ENCODE measurements at regions of chr22 and their contacts with region 1.

Region 1: GRCh38 chr22:17742527-17742902 is 31.8 kb downstream of the BID start:
- DNase-seq: peak; percentile 95
- ATAC-seq: peak; percentile 91
- H3K4me3 Mint-ChIP-seq: no peak overlapping the region
- H3K27ac Mint-ChIP-seq: no peak overlapping the region; the same call in 1 of the 2 replicates
- H3K4me1 Mint-ChIP-seq: peaks cover 19% of the 10 kb centered on the region
- H3K27me3 Mint-ChIP-seq: no peaks in the 10 kb centered on the region
- CTCF ChIP-seq: peak; percentile 74

Region 2: DNA sequence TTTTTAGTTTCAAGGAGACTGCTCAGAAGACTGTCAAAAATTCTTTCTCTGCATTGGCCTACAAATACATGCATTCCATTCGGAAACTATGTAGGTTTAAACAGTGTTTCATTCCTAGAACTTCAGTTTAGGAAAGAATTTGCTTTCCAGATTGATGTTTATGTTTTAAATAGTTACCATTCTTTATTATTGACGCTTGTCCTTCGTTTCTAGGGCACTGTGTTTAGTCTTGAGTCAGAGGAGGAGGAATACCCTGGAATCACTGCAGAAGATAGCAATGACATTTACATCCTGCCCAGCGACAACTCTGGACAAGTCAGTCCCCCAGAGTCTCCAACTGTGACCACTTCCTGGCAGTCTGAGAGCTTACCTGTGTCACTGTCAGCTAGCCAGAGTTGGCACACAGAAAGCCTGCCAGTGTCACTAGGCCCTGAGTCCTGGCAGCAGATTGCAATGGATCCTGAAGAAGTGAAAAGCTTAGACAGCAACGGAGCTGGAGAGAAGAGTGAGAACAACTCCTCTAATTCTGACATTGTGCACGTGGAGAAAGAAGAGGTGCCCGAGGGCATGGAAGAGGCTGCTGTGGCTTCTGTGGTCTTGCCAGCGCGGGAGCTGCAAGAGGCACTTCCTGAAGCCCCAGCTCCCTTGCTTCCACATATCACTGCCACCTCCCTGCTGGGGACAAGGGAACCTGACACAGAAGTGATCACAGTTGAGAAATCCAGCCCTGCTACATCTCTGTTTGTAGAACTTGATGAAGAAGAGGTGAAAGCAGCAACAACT is 15.9 kb before region 1 on chr22:
- CTCF ChIA-PET with region 1: interaction called, 12 read pairs
- POLR2A ChIA-PET with region 1: no interaction called
- DNase-seq: no peak
- ATAC-seq: no peak
- H3K4me3 Mint-ChIP-seq: no peak overlapping the region
- H3K27ac Mint-ChIP-seq: peak overlapping the region; percentile 46; the same call in 1 of the 2 replicates
- H3K4me1 Mint-ChIP-seq: no peaks in the 10 kb centered on the region
- H3K27me3 Mint-ChIP-seq: no peaks in the 10 kb centered on the region
- CTCF ChIP-seq: no peak

Region 3: GRCh38 chr22:17767233-17768065 is 24.9 kb after region 1 on chr22:
- CTCF ChIA-PET with region 1: interaction called, 40 read pairs
- POLR2A ChIA-PET with region 1: interaction called, 3 read pairs
- DNase-seq: no peak
- ATAC-seq: no peak
- H3K4me3 Mint-ChIP-seq: no peak overlapping the region
- H3K27ac Mint-ChIP-seq: peak overlapping the region; percentile 8; the same call in 1 of the 2 replicates
- H3K4me1 Mint-ChIP-seq: peaks cover 6% of the 10 kb centered on the region
- H3K27me3 Mint-ChIP-seq: no peaks in the 10 kb centered on the region; the same call in 1 of the 2 replicates
- CTCF ChIP-seq: no peak

Region 4: DNA sequence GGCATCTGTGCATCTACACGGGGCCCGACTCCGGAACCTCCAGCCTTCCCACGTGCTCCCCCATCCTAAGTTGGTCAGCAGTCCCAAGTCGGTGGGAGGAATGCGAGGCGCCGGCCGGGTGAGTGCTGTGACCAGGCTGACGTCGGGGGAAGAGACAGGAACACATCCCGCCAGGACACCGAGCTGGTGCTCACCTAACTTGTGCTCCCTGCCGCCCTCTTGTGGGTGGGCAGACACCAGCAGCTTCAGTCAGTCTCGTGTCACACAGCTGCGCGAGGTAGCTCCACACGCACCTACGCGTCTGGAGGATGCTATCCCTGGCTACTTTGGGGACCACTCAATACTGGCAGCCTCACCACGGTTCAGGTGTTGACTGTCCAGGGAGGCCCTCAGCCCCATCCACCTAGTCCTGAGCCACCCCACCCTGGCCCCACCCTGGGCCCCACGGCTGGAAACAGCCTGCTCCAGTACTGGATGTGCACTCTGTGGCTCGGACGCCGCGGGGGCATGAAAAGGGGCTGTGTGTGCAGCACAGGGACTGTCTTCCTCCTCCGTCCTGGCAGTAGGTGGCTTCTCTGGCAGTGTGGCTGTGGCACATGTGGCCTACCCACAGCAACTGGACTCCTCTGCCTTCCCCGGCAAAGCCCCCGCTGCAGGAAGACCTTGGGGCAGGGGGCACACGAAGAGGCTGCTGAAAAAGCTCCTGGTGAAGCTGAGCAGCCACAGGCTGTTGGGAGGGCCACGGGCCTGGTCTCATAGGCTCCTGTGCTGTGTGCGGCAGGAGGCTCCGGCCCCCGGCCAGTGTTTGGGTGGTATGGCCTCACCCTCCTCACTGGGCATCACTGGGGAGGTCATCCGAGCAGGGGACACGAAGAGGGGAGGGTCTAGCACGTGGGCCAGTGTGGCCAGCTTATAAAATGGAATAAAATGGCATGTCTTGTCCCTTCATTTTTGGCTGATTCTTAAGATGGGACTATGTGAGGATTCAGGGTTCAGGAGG is 43.0 kb after region 1 on chr22:
- CTCF ChIA-PET with region 1: interaction called, 302 read pairs
- POLR2A ChIA-PET with region 1: interaction called, 4 read pairs
- DNase-seq: peak; percentile 95
- ATAC-seq: peak; percentile 82
- H3K4me3 Mint-ChIP-seq: no peak overlapping the region
- H3K27ac Mint-ChIP-seq: no peak overlapping the region
- H3K4me1 Mint-ChIP-seq: peaks cover 10% of the 10 kb centered on the region
- H3K27me3 Mint-ChIP-seq: no peaks in the 10 kb centered on the region; the same call in 1 of the 2 replicates
- CTCF ChIP-seq: peak; percentile 65; the same call in 1 of the 2 replicates

Region 5: GRCh38 chr22:17818180-17818579 is 75.7 kb after region 1 on chr22:
- CTCF ChIA-PET with region 1: interaction called, 21 read pairs
- POLR2A ChIA-PET with region 1: no interaction called
- DNase-seq: no peak
- ATAC-seq: no peak
- H3K4me3 Mint-ChIP-seq: no peak overlapping the region
- H3K27ac Mint-ChIP-seq: no peak overlapping the region
- H3K4me1 Mint-ChIP-seq: peaks cover 4% of the 10 kb centered on the region; the same call in 1 of the 2 replicates
- H3K27me3 Mint-ChIP-seq: no peaks in the 10 kb centered on the region
- CTCF ChIP-seq: no peak